GM10248 (cell line): ENCODE measurements at regions of chr2 and their contacts with region 1.

Region 1: GRCh38 chr2:67600946-67601345 is 203.8 kb downstream of the ETAA1 start:
- DNase-seq: no peak
- CTCF ChIP-seq: no peak

Region 2: GRCh38 chr2:67548395-67549201 is 52.3 kb before region 1 on chr2:
- CTCF ChIA-PET with region 1: no interaction called
- POLR2A ChIA-PET with region 1: no interaction called
- DNase-seq: no peak
- CTCF ChIP-seq: no peak

Region 3: GRCh38 chr2:67642053-67642397 is 41.1 kb after region 1 on chr2:
- CTCF ChIA-PET with region 1: no interaction called
- POLR2A ChIA-PET with region 1: interaction called, 12 read pairs
- DNase-seq: no peak
- CTCF ChIP-seq: no peak